ENCODE measurements at regions of chr5 and their contacts with region 1.

Region 1: GRCh38 chr5:74919487-74919886 is 53.3 kb upstream of the FAM169A start:
- DNase-seq: no peak
- ATAC-seq: peak; percentile 75
- H3K4me3 ChIP-seq: no peak overlapping the region
- H3K27ac ChIP-seq: no peak overlapping the region
- H3K4me1 ChIP-seq: no peaks in the 10 kb centered on the region
- H3K27me3 ChIP-seq: no peaks in the 10 kb centered on the region; a peak in 1 of 4 replicates
- CTCF ChIP-seq: peak; percentile 44 to 53 (median 47); a peak in 4 of 6 replicates
- EP300 ChIP-seq: no peak
- POLR2A ChIP-seq: no peak
- RAD21 ChIP-seq: peak; percentile 43; the same call in 1 of the 2 replicates

Region 2: GRCh38 chr5:74673011-74673790 is 246.3 kb before region 1 on chr5:
- CTCF ChIA-PET with region 1: interaction called, 7 read pairs
- POLR2A ChIA-PET with region 1: no interaction called
- RAD21 ChIA-PET with region 1: no interaction called
- SMC1A ChIA-PET with region 1: no interaction called
- in situ Hi-C with region 1: no loop called
- intact Hi-C with region 1: loop called (anchors 1 kb)
- DNase-seq: no peak
- ATAC-seq: 0 out of 3 replicates have a peak, but pooled peaks have one; percentile 29
- H3K4me3 ChIP-seq: no peak overlapping the region
- H3K27ac ChIP-seq: no peak overlapping the region
- H3K4me1 ChIP-seq: no peaks in the 10 kb centered on the region
- H3K27me3 ChIP-seq: no peaks in the 10 kb centered on the region
- CTCF ChIP-seq: peak in 2 of 3 experiments; percentile 36 to 49; a peak in 2 of 6 replicates
- EP300 ChIP-seq: no peak
- POLR2A ChIP-seq: no peak
- RAD21 ChIP-seq: peak; percentile 44

Region 3: DNA sequence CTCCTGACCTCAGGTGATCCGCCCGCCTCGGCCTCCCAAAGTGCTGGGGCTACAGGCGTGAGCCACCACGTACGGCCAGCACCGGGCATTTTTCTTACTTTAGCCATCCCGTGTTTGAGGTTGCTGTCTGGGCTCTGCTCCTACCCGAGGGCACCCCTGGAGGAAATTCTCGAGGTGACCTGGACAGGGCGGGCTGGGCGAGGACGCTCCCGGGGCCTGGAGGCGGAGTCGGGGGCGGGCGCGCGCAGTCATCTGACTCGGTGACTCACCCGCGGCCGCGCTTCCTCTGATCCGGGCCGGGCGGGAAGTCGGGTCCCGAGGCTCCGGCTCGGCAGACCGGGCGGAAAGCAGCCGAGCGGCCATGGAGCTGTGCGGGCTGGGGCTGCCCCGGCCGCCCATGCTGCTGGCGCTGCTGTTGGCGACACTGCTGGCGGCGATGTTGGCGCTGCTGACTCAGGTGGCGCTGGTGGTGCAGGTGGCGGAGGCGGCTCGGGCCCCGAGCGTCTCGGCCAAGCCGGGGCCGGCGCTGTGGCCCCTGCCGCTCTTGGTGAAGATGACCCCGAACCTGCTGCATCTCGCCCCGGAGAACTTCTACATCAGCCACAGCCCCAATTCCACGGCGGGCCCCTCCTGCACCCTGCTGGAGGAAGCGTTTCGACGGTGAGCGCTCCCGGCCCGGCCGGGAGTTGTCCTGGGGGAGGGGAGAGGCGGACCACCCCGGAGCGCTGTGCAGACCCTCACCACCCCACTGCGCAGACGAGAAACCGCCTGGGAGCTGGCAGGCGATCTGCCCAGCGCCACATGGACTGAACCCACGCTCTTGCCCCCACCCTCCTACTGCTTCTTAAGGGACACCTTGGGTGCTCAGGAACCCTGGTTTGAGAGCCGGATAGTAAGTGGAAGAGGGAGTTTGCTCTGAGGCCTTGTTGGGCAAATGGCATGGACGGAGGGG is 234.3 kb before region 1 on chr5 and contains the start of gene HEXB:
- CTCF ChIA-PET with region 1: interaction called, 3 read pairs
- POLR2A ChIA-PET with region 1: no interaction called
- RAD21 ChIA-PET with region 1: no interaction called
- SMC1A ChIA-PET with region 1: interaction called, 3 read pairs
- in situ Hi-C with region 1: loop called (anchors 5 kb)
- intact Hi-C with region 1: no loop called
- DNase-seq: peak; percentile 27
- ATAC-seq: peak; percentile 89
- H3K4me3 ChIP-seq: peak within 1 kb of the TSS; percentile 80
- H3K27ac ChIP-seq: peak within 1 kb of the TSS; percentile 56
- H3K4me1 ChIP-seq: no peaks in the 10 kb centered on the region
- H3K27me3 ChIP-seq: no peaks in the 10 kb centered on the region
- CTCF ChIP-seq: peak in 1 of 3 experiments; percentile 12; a peak in 1 of 6 replicates
- EP300 ChIP-seq: no peak
- POLR2A ChIP-seq: peak; percentile 96
- RAD21 ChIP-seq: no peak
- polyA plus RNA-seq, gene HEXB: 13.5 to 43.4 TPM

Region 4: DNA sequence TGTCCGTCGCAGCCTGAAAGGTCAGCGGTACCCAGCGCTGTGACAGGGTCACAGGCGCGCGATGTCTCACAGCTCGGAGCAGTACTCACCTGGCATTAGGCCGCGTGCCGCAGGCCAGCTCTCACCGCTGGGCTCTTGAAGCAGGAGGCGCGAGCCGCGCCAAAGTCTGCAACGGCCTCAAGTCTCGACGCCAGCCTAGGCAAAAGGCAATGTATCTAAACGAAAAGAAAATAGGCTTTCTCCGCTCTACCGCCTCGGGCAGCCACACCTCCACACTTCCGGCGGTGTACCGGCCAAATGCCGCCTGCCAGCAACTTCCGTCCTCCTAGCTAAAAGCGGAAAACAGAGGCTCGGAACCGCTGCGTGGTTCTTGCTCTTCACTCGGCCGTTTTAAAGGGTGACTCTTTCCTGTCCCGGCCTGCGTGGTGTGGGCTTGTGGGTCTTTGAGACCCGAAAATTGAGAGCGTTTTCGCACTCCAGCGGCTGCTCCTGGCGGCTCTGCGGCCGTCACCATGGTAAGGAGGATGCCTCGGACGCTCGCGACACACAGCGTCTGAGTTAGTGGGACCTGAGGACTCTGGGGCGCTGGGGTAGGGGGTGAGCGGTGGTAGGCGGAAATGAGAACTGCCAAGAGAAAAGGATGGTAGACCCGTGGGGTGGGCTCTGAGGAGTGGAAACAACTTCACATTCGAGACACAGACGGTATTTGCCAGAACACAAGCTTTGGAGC is 152.5 kb before region 1 on chr5 and contains the starts of genes GFM2 and NSA2:
- CTCF ChIA-PET with region 1: no interaction called
- POLR2A ChIA-PET with region 1: no interaction called
- RAD21 ChIA-PET with region 1: no interaction called
- SMC1A ChIA-PET with region 1: no interaction called
- in situ Hi-C with region 1: no loop called
- intact Hi-C with region 1: loop called (anchors 5 kb)
- DNase-seq: peak; percentile 88
- ATAC-seq: peak; percentile 85
- H3K4me3 ChIP-seq: peak within 1 kb of the TSS; percentile 94
- H3K27ac ChIP-seq: peak within 1 kb of the TSS; percentile 81
- H3K4me1 ChIP-seq: peaks cover 9% of the 10 kb centered on the region
- H3K27me3 ChIP-seq: no peaks in the 10 kb centered on the region
- CTCF ChIP-seq: no peak
- EP300 ChIP-seq: no peak; a peak in 1 of 4 replicates
- POLR2A ChIP-seq: peak; percentile 82
- RAD21 ChIP-seq: no peak
- polyA plus RNA-seq, gene GFM2: 19.9 to 26.0 TPM
- polyA plus RNA-seq, gene NSA2: 77.8 to 98.2 TPM

Region 5: GRCh38 chr5:75021219-75021618 is 101.7 kb after region 1 on chr5:
- CTCF ChIA-PET with region 1: no interaction called
- POLR2A ChIA-PET with region 1: no interaction called
- RAD21 ChIA-PET with region 1: no interaction called
- SMC1A ChIA-PET with region 1: no interaction called
- in situ Hi-C with region 1: no loop called
- intact Hi-C with region 1: no loop called
- DNase-seq: no peak
- ATAC-seq: no peak
- H3K4me3 ChIP-seq: no peak overlapping the region
- H3K27ac ChIP-seq: no peak overlapping the region
- H3K4me1 ChIP-seq: no peaks in the 10 kb centered on the region
- H3K27me3 ChIP-seq: no peaks in the 10 kb centered on the region
- CTCF ChIP-seq: no peak
- EP300 ChIP-seq: no peak
- POLR2A ChIP-seq: no peak
- RAD21 ChIP-seq: no peak